ENCODE measurements at regions of chr7 and their contacts with region 1.

Region 1: GRCh38 chr7:13778967-13779366 is 210.5 kb downstream of the ETV1 start:
- DNase-seq: peak; percentile 35
- ATAC-seq: peak; percentile 73
- H3K4me3 ChIP-seq: no peak overlapping the region
- H3K27ac ChIP-seq: no peak overlapping the region
- H3K4me1 ChIP-seq: no peaks in the 10 kb centered on the region
- H3K27me3 ChIP-seq: no peaks in the 10 kb centered on the region
- CTCF ChIP-seq: no peak
- POLR2A ChIP-seq: no peak
- RAD21 ChIP-seq: no peak

Region 2: DNA sequence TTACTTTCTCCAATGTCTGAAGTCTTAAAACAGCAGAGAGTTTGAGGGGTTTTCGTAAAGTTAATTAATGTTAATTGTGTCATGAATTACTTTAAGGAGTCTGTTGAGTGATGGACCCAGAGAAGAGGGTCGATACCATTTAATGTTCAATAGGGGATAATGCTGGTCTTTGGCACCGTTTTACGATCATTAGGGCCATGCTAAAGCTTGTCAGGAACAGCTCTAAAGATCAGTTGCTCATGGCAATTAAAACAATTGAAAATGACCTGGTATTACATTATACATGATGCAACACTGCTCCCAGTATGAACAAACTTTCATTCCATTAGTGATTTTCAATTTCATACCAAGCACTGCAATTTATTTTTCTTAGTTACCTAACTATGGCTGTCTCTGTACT is 86.4 kb before region 1 on chr7:
- CTCF ChIA-PET with region 1: no interaction called
- POLR2A ChIA-PET with region 1: no interaction called
- dilution Hi-C with region 1: no loop called
- in situ Hi-C with region 1: no loop called
- intact Hi-C with region 1: no loop called
- DNase-seq: no peak
- ATAC-seq: no peak
- H3K4me3 ChIP-seq: no peak overlapping the region
- H3K27ac ChIP-seq: no peak overlapping the region
- H3K4me1 ChIP-seq: no peaks in the 10 kb centered on the region
- H3K27me3 ChIP-seq: no peaks in the 10 kb centered on the region
- CTCF ChIP-seq: no peak
- POLR2A ChIP-seq: no peak
- RAD21 ChIP-seq: no peak

Region 3: GRCh38 chr7:13713092-13713491 is 65.9 kb before region 1 on chr7:
- CTCF ChIA-PET with region 1: no interaction called
- POLR2A ChIA-PET with region 1: no interaction called
- dilution Hi-C with region 1: no loop called
- in situ Hi-C with region 1: no loop called
- intact Hi-C with region 1: loop called (anchors 2 kb)
- DNase-seq: no peak
- ATAC-seq: no peak
- H3K4me3 ChIP-seq: no peak overlapping the region
- H3K27ac ChIP-seq: no peak overlapping the region
- H3K4me1 ChIP-seq: no peaks in the 10 kb centered on the region
- H3K27me3 ChIP-seq: no peaks in the 10 kb centered on the region
- CTCF ChIP-seq: no peak
- POLR2A ChIP-seq: no peak
- RAD21 ChIP-seq: no peak

Measured in IMR-90 (cell line).